ENCODE measurements at regions of chr2 and their contacts with region 1.

Region 1: DNA sequence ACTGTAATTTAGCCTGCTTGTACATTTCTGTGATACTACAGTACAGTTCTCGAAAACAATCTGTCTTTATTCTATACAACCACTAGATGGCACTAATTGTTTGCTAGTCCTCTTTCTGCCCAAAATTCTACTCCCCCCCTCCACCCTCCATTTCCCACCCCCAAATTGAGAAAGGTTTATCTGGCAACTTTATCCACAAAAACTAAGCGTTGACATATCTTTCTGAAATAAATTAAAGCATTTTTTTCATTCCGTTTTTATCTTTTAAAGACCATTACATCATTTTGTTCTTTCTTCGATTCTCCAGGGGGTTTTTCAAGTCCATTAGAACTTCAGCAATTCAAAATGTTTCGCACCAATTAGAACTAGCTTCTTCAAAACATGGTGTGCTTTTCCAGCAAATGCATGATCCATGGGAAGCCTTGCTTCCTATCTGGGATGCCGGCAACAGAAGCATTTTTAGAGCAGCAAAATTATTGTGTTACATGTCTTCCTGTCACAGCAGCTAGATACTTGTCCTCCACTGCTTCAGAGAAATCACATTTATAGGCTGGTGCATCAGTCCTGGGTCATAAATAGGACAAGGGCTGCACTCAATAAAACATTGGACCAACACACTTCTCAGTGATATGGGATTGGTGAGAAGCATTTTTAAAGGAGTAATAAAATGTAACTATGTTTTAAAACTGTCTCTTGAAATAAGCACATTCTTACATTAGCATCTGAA is 241.3 kb downstream of the PAX3 start:
- DNase-seq: no peak
- ATAC-seq: peak; percentile 76 to 79
- H3K4me3 ChIP-seq: no peak overlapping the region
- H3K27ac ChIP-seq: no peak overlapping the region
- H3K4me1 ChIP-seq: no peaks in the 10 kb centered on the region
- H3K27me3 ChIP-seq: no peaks in the 10 kb centered on the region

Region 2: DNA sequence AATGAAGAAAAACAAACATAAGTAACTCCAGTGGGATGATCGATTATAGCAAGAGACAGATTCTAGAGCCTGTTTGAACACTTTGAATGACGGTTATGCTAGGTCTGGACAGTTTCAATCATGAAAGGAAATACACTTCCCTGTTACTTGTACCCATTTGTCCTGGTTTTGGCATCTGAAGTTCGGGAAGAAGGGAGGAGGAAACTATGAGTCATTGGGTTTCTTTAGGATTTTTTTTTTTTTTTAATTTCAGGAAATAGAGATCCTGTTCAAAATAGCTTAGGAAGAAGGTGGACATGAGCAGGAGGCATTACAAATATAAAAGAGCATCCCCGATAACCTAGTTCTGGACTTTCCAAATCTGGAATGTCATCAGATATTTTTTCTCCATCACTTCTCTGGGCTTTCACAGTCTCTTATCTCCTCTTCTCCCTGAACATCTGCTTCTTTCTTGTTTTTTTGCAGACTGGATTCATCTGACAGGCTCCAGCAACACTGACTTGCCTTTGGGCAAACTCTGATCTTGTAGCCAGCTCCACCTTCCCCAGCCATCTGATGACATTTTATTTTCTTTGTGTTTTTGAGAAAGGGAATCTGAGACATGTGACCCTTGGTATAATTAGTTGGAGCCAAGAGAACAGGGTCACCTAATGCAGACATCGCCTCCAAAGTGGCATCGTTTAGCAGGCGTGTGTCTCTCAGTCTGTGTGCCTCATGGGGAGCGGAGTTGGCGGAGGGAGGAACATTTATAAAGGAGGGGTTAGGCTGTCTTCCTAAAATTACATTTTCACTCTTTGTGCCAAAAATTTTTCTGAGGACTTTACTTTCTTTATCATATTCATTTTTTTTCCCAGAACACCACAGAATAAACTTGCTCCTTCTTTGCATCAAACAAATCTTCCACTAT is 290.2 kb before region 1 on chr2:
- intact Hi-C with region 1: no loop called
- DNase-seq: no peak
- ATAC-seq: no peak
- H3K4me3 ChIP-seq: no peak overlapping the region
- H3K27ac ChIP-seq: no peak overlapping the region
- H3K4me1 ChIP-seq: no peaks in the 10 kb centered on the region
- H3K27me3 ChIP-seq: no peaks in the 10 kb centered on the region

Region 3: DNA sequence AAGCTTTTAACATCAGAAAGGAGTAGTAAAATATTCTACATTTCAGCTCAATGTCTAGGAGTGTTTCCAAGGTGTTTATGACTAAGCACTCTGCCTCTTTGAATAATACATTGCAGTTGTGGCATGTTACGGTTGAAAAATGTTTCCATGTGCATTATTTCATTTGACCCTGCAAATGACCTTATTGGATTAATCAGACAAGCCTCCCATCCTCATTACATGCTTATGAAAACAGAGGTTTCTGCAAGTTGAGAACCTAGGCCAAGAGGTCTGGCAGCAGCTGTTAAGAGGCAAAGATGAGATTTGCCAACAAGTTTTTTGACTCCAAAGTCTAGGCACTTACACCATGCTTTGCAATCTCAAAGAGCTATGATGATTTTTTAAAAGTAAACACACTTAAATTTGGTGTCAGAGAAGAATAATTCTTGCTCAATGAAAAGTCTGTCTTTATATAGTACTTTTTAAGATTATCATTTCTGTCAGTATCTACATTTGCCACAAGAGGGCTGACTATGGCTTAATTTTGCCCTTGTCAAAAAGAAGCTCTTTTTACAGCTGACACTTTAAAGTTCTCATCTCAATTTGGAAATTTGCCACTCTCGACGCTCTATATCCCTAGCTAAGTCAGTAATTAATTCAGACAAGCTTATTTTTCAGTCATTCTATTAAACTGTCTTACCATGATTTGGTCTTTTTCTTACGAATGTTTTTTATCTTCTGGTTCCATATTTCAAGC is 19.3 kb before region 1 on chr2:
- intact Hi-C with region 1: no loop called
- DNase-seq: no peak
- ATAC-seq: no peak
- H3K4me3 ChIP-seq: no peak overlapping the region
- H3K27ac ChIP-seq: no peak overlapping the region
- H3K4me1 ChIP-seq: no peaks in the 10 kb centered on the region
- H3K27me3 ChIP-seq: no peaks in the 10 kb centered on the region

Region 4: GRCh38 chr2:222305516-222306392 is 248.2 kb after region 1 on chr2:
- intact Hi-C with region 1: loop called in 2 of 4 experiments (anchors 10 kb)
- DNase-seq: peak in 1 of 3 donors; percentile 57
- ATAC-seq: peak; percentile 38 to 53
- H3K4me3 ChIP-seq: peak overlapping the region; percentile 57
- H3K27ac ChIP-seq: no peak overlapping the region
- H3K4me1 ChIP-seq: peaks cover 2% of the 10 kb centered on the region
- H3K27me3 ChIP-seq: no peaks in the 10 kb centered on the region